Activated B cell treated with CpG ODN at 0.5 μM for 24 hours (primary cell): ENCODE measurements at regions of chr3 and their contacts with region 1.

Region 1: GRCh38 chr3:1087066-1087560 is 5.7 kb upstream of the CNTN6 start:
- DNase-seq: no peak
- ATAC-seq: no peak
- H3K4me3 Mint-ChIP-seq: no peak overlapping the region
- H3K27ac Mint-ChIP-seq: no peak overlapping the region
- H3K4me1 Mint-ChIP-seq: no peaks in the 10 kb centered on the region
- H3K27me3 Mint-ChIP-seq: no peaks in the 10 kb centered on the region
- CTCF ChIP-seq: no peak

Region 2: DNA sequence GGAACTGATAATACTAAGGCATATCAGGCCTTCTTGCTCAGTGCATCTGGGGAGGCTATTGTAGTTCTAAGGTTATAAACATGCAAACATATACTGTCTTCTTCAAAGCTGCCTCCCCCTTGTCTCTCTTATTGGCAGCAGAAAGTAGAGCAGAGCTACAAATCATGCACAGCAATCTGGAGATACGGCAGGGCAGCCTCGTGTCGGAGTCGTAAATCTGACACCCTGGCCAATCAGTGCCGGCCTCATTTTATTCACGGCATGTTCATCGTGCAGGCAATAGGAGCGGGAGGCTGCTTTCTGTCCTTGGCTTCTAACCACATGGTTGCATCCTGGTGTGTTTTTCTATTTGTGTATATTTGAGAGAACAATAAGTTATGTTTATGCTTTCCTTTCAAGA is 294.5 kb before region 1 on chr3:
- CTCF ChIA-PET with region 1: no interaction called
- POLR2A ChIA-PET with region 1: no interaction called
- intact Hi-C with region 1: no loop called
- DNase-seq: no peak
- ATAC-seq: no peak
- H3K4me3 Mint-ChIP-seq: no peak overlapping the region
- H3K27ac Mint-ChIP-seq: no peak overlapping the region
- H3K4me1 Mint-ChIP-seq: no peaks in the 10 kb centered on the region
- H3K27me3 Mint-ChIP-seq: no peaks in the 10 kb centered on the region
- CTCF ChIP-seq: no peak

Region 3: DNA sequence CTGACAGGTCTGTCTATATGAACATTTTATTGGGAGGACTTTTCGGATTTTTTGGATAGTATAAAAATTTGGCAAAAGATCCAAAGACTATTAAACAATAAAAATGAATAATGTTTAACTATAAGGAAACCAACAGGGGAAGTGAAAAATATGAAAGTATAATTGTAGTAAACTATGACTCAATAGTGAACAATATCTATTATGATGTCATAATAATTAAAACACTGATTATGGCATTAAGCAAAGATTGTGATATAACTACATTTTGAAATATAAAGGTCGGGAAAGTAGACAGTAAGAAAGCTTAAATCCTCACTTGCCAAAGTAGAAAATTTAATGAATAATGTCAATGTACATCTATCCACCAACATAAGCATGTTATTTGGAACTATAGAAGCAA is 38.5 kb before region 1 on chr3:
- CTCF ChIA-PET with region 1: no interaction called
- POLR2A ChIA-PET with region 1: no interaction called
- intact Hi-C with region 1: no loop called
- DNase-seq: no peak
- ATAC-seq: no peak
- H3K4me3 Mint-ChIP-seq: no peak overlapping the region
- H3K27ac Mint-ChIP-seq: no peak overlapping the region
- H3K4me1 Mint-ChIP-seq: no peaks in the 10 kb centered on the region
- H3K27me3 Mint-ChIP-seq: no peaks in the 10 kb centered on the region
- CTCF ChIP-seq: no peak

Region 4: DNA sequence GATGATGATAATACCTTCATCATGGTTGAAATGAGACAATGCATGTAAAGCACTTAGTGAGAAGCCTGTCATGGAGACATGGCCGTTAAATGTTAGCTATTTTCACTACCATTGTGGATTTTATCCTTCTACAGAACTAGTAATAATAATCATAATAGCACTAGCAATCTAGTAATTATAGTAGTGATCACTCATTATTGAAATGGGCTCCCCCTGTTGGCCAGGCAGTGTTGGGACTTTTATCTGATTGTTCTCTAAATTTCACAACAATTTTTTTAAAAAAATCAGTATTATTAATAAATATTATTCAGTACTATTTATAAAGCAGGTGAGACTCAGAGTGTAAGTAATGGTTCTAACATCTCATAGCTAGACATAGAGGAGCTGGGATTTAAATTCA is 1626.8 kb after region 1 on chr3:
- CTCF ChIA-PET with region 1: no interaction called
- POLR2A ChIA-PET with region 1: no interaction called
- intact Hi-C with region 1: loop called (anchors 5 kb)
- DNase-seq: no peak
- ATAC-seq: no peak
- H3K4me3 Mint-ChIP-seq: no peak overlapping the region
- H3K27ac Mint-ChIP-seq: no peak overlapping the region
- H3K4me1 Mint-ChIP-seq: no peaks in the 10 kb centered on the region
- H3K27me3 Mint-ChIP-seq: no peaks in the 10 kb centered on the region
- CTCF ChIP-seq: no peak